Activated naive CD4-positive, alpha-beta T cell treated with anti-CD3 and anti-CD28 coated beads for 36 hours (primary cell): ENCODE measurements at regions of chr12 and their contacts with region 1.

Region 1: DNA sequence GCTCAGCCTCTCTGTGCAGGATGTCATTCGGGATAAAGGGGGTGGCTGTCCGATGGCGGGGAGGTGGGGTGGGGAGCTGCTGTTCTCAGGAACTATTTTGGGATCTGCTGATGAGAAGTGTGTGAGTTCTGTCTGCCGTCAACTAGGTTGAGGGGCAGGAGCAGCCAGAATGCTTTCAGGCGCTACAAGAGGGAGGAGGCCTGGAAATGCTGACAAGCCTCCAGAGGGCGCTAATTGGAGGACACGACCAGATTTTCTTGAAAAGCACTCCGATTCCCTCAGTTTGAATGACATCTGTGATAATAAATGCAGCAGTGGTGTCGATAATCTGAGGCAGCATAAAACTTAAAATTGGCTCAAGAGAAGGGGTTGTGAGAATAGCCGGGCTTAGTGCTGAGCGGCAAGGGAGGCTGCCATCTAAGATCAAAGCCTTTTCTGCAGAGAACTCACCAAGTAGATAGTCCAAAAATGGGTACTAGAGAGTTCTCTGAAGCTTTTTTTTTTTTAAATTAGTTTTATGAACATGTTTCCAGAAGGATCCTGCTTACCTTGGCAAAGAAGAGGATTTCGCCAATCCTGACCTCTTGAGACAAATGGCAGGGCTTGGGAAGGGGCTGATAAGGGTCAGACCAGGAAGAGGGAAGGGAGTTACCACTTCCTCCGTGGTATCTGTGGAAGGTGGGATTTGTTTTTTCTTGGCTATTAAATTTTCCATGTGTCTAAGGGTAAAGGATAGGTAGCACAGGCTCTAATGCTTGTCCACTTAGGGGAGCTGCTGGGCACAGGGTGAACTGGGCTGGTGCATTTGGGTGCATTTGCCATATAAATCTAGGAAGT is 94.4 kb downstream of the CRACR2A start:
- DNase-seq: peak; percentile 52
- H3K4me3 Mint-ChIP-seq: no peak overlapping the region
- H3K27ac Mint-ChIP-seq: no peak overlapping the region
- H3K4me1 Mint-ChIP-seq: no peaks in the 10 kb centered on the region
- H3K27me3 Mint-ChIP-seq: no peaks in the 10 kb centered on the region

Region 2: GRCh38 chr12:3496957-3497356 is 161.6 kb before region 1 on chr12:
- CTCF ChIA-PET with region 1: no interaction called
- intact Hi-C with region 1: no loop called
- DNase-seq: no peak
- H3K4me3 Mint-ChIP-seq: no peak overlapping the region
- H3K27ac Mint-ChIP-seq: no peak overlapping the region
- H3K4me1 Mint-ChIP-seq: peaks cover 4% of the 10 kb centered on the region
- H3K27me3 Mint-ChIP-seq: peaks cover 40% of the 10 kb centered on the region

Region 3: GRCh38 chr12:3641428-3642018 is 17.0 kb before region 1 on chr12:
- CTCF ChIA-PET with region 1: no interaction called
- intact Hi-C with region 1: no loop called
- DNase-seq: no peak
- H3K4me3 Mint-ChIP-seq: no peak overlapping the region
- H3K27ac Mint-ChIP-seq: no peak overlapping the region
- H3K4me1 Mint-ChIP-seq: no peaks in the 10 kb centered on the region
- H3K27me3 Mint-ChIP-seq: no peaks in the 10 kb centered on the region

Region 4: DNA sequence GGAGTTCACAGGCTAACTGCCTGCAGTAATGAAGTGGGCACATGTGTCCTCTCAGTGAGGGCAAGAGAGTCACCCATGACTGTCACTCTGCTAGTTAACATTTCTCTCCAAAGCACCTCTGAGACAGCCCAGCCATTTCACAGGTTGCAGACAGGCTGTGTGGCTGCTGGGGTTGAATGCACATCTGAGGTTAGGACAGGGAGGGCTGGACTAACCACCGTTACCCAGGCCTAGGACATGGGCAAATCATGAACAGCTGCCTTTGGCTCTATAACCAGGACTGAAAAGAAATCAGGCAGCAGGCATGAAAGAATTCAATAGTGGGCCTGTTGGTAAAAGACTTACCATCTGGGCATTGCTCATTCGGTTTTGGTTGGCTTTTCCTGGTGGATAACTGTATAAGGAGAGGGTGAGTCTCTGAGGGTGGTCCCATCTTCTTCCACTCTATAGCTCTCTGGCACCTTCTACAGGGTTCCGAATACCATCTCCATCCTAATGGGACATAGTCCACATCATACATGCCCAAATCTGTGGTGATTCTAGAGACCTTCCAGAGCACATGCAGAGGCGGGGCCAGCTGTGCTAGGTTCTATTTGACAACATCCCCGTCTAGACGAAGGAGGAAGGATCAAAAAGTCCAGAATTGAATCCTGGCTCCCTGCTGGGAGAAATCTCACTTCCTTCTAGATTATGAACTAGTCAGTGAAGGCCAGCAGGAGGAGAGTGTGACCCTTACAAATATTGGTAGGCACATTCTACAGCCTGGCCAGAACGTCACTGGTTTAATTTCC is 83.5 kb after region 1 on chr12:
- CTCF ChIA-PET with region 1: no interaction called
- intact Hi-C with region 1: no loop called
- DNase-seq: no peak
- H3K4me3 Mint-ChIP-seq: no peak overlapping the region
- H3K27ac Mint-ChIP-seq: no peak overlapping the region
- H3K4me1 Mint-ChIP-seq: peaks cover 12% of the 10 kb centered on the region
- H3K27me3 Mint-ChIP-seq: no peaks in the 10 kb centered on the region

Region 5: DNA sequence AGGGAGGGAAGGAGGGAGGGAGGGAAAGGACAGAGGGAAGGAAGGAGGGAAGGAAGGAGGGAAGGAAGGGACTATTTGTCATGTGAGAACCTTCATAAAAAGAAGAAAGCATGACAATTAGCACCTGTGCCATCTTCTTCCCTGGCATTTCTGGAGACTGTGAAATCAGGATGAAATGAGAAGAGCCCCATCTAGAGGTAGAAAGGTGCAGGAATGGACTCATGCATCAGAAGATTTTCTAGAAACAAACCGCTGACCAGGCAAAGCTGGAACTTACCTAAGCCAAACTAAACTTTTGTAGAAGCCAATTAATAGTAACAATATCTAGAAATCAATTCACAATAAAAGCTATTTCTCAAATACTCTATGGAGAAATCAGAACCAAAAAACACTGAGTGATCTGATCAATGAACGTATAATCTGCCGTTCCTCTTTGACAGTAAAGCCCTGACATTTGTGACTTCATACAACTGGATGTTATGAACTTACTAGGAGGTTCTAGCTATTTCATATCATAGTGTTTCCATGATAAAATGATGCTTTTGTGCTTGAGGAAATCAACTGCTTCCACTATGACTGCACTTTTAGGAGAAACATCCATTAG is 118.8 kb after region 1 on chr12:
- CTCF ChIA-PET with region 1: interaction called, 3 read pairs
- intact Hi-C with region 1: loop called (anchors 1 kb)
- DNase-seq: peak; percentile 23
- H3K4me3 Mint-ChIP-seq: no peak overlapping the region
- H3K27ac Mint-ChIP-seq: no peak overlapping the region
- H3K4me1 Mint-ChIP-seq: peaks cover 3% of the 10 kb centered on the region
- H3K27me3 Mint-ChIP-seq: no peaks in the 10 kb centered on the region

Region 6: GRCh38 chr12:3803865-3804472 is 145.4 kb after region 1 on chr12:
- CTCF ChIA-PET with region 1: interaction called, 14 read pairs
- intact Hi-C with region 1: loop called (anchors 2 kb)
- DNase-seq: peak; percentile 89
- H3K4me3 Mint-ChIP-seq: no peak overlapping the region
- H3K27ac Mint-ChIP-seq: no peak overlapping the region
- H3K4me1 Mint-ChIP-seq: peaks cover 15% of the 10 kb centered on the region
- H3K27me3 Mint-ChIP-seq: no peaks in the 10 kb centered on the region